Calu3 (cell line): ENCODE measurements at regions of chr16 and their contacts with region 1.

Region 1: DNA sequence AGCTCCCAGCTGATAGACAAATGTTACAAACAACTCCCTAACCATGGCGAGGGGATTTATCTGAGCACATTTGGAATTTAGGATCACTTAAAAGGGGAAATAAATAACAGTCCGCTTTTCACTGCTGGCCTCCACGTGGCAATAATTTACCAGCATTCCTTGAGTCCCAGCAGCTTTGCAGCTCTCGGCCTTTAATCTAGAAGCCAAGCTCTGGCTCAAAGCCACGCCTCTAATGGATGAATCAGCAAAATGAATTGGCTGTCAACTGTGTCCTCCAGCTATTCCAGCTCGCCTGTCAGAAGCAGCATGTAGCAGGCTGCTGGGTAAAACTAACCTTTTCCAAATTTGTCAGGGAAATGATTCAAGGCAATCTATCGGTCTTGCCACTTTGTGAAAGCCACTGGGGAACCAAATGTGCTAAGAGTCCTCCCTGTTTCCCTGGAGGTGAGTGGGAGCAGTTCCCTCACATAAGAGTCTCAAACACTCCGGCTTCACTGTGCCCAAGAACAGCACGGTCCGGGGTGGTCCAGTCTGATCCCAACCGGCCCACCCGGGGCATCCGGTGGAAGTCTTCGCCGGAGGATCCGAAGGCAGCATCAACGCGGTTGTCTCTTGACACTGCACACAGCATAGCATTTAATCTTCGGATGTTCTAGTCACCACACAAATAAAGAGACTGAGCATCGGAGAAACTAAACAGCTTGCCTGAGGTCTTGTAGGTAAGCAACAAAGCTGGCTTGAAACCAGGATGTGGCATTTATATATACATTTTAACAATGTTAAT is 143.3 kb downstream of the PARN start:
- DNase-seq: peak; percentile 79
- H3K4me3 Mint-ChIP-seq: peak overlapping the region; percentile 40
- H3K27ac Mint-ChIP-seq: peak overlapping the region; percentile 40
- H3K4me1 Mint-ChIP-seq: peaks cover 43% of the 10 kb centered on the region
- H3K27me3 Mint-ChIP-seq: no peaks in the 10 kb centered on the region
- CTCF ChIP-seq: no peak

Region 2: GRCh38 chr16:13940397-13940933 is 546.2 kb before region 1 on chr16:
- CTCF ChIA-PET with region 1: no interaction called
- intact Hi-C with region 1: no loop called
- DNase-seq: no peak
- H3K4me3 Mint-ChIP-seq: no peak overlapping the region
- H3K27ac Mint-ChIP-seq: no peak overlapping the region
- H3K4me1 Mint-ChIP-seq: no peaks in the 10 kb centered on the region
- H3K27me3 Mint-ChIP-seq: no peaks in the 10 kb centered on the region
- CTCF ChIP-seq: no peak

Region 3: DNA sequence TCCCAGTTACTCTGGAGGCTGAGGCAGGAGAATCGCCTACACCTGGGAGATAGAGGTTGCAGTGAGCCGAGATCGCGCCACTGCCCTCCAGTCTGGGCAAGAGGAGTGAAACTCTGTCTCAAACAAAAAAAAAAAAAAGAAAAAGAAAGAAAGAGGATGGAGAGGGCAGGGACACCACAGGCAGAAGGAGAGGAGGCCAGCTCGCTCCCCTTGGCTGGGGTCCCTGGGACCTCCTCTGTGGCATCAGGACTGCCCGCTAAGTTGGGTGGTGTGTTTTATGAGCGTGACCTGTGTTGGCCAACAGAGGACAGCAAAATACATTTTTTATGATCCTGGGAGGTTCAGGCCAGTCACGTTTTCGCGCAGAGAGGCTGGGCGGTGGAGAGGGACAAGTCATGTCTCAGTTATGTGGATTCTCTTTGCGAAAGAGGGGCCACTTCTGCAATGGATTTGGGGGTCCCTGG is 186.0 kb before region 1 on chr16:
- CTCF ChIA-PET with region 1: interaction called, 3 read pairs
- intact Hi-C with region 1: loop called (anchors 5 kb)
- DNase-seq: peak; percentile 76
- H3K4me3 Mint-ChIP-seq: peak overlapping the region; percentile 82
- H3K27ac Mint-ChIP-seq: peak overlapping the region; percentile 76
- H3K4me1 Mint-ChIP-seq: peaks cover 15% of the 10 kb centered on the region
- H3K27me3 Mint-ChIP-seq: no peaks in the 10 kb centered on the region
- CTCF ChIP-seq: peak; percentile 62

Region 4: DNA sequence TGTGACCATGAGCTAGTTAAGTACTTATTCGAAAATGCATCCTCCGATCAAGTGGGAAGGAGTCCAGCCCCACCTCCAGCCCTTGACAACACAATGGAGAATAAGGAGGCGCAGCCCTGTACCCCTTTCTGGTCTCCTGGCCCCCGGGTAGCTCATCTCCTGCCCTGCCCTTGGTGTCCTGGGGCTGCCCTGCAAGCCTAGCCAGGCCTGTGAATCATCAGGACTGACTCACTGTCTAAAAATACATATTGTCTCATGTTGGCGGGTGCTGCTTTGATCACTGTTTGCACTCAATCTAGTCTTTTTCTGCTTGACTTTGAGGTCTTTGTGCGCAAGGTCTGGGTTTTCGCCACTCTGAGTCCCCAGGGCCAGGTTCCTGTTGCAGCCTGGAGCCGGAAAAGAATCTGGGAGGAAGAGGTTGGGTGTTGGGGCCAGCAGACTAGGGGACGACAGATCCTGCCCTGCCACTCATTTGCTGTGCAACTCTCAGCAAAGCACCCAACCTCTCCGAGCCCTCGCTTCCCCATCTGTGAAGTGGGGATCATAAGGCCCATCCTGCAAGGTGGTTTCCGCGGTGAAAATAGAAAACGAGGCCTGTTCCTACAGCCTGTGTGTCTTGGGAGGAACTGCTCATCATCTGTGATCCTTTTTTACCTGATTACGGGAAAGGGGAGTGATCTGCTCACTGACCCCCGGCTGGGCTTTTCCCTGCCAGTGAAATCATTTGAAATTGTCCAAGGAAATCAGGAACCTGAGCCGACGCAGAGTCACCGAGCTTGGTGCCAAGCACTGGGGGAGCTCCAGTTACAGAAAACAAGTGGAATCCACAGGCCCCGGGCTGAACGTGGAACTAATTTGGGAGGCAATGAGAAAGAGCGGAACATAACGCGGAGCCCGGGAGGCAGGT is 87.1 kb before region 1 on chr16:
- CTCF ChIA-PET with region 1: interaction called, 4 read pairs
- intact Hi-C with region 1: loop called (anchors 5 kb)
- DNase-seq: peak; percentile 73
- H3K4me3 Mint-ChIP-seq: peak overlapping the region; percentile 31
- H3K27ac Mint-ChIP-seq: peak overlapping the region; percentile 87
- H3K4me1 Mint-ChIP-seq: peaks cover 30% of the 10 kb centered on the region
- H3K27me3 Mint-ChIP-seq: no peaks in the 10 kb centered on the region
- CTCF ChIP-seq: no peak

Region 5: GRCh38 chr16:14449790-14450480 is 36.8 kb before region 1 on chr16:
- CTCF ChIA-PET with region 1: no interaction called
- intact Hi-C with region 1: loop called (anchors 5 kb)
- DNase-seq: no peak
- H3K4me3 Mint-ChIP-seq: peak overlapping the region; percentile 5
- H3K27ac Mint-ChIP-seq: peak overlapping the region; percentile 15
- H3K4me1 Mint-ChIP-seq: peaks cover 33% of the 10 kb centered on the region
- H3K27me3 Mint-ChIP-seq: no peaks in the 10 kb centered on the region
- CTCF ChIP-seq: no peak

Region 6: GRCh38 chr16:14472357-14472756 is 14.4 kb before region 1 on chr16:
- CTCF ChIA-PET with region 1: interaction called, 6 read pairs
- intact Hi-C with region 1: loop called (anchors 1 kb)
- DNase-seq: no peak
- H3K4me3 Mint-ChIP-seq: no peak overlapping the region
- H3K27ac Mint-ChIP-seq: no peak overlapping the region
- H3K4me1 Mint-ChIP-seq: peaks cover 43% of the 10 kb centered on the region
- H3K27me3 Mint-ChIP-seq: no peaks in the 10 kb centered on the region
- CTCF ChIP-seq: no peak